Dendritic cell treated with granulocyte-macrophage colony-stimulating factor and Interleukin-4, amounts not matched to agents 40 ng/mL and 50 ng/mL, for 4 days (primary cell): ENCODE measurements at regions of chr11 and their contacts with region 1.

Region 1: GRCh38 chr11:65418711-65419459 is 3.7 kb upstream of the NEAT1 start:
- H3K4me3 Mint-ChIP-seq: peak overlapping the region; percentile 78
- H3K27ac Mint-ChIP-seq: peak overlapping the region; percentile 100
- H3K4me1 Mint-ChIP-seq: peaks cover 67% of the 10 kb centered on the region
- H3K27me3 Mint-ChIP-seq: no peaks in the 10 kb centered on the region

Region 2: GRCh38 chr11:65382033-65382807 is 36.7 kb before region 1 on chr11 and contains the start of gene SLC25A45:
- intact Hi-C with region 1: loop called (anchors 5 kb)
- H3K4me3 Mint-ChIP-seq: peak within 1 kb of the TSS; percentile 82
- H3K27ac Mint-ChIP-seq: peak within 1 kb of the TSS; percentile 98
- H3K4me1 Mint-ChIP-seq: peaks cover 78% of the 10 kb centered on the region
- H3K27me3 Mint-ChIP-seq: no peaks in the 10 kb centered on the region

Region 3: GRCh38 chr11:65477149-65477965 is 58.5 kb after region 1 on chr11:
- intact Hi-C with region 1: no loop called
- H3K4me3 Mint-ChIP-seq: peak overlapping the region; percentile 95
- H3K27ac Mint-ChIP-seq: peak overlapping the region; percentile 100
- H3K4me1 Mint-ChIP-seq: peaks cover 45% of the 10 kb centered on the region
- H3K27me3 Mint-ChIP-seq: no peaks in the 10 kb centered on the region